A673 (cell line): ENCODE measurements at regions of chr12 and their contacts with region 1.

Region 1: DNA sequence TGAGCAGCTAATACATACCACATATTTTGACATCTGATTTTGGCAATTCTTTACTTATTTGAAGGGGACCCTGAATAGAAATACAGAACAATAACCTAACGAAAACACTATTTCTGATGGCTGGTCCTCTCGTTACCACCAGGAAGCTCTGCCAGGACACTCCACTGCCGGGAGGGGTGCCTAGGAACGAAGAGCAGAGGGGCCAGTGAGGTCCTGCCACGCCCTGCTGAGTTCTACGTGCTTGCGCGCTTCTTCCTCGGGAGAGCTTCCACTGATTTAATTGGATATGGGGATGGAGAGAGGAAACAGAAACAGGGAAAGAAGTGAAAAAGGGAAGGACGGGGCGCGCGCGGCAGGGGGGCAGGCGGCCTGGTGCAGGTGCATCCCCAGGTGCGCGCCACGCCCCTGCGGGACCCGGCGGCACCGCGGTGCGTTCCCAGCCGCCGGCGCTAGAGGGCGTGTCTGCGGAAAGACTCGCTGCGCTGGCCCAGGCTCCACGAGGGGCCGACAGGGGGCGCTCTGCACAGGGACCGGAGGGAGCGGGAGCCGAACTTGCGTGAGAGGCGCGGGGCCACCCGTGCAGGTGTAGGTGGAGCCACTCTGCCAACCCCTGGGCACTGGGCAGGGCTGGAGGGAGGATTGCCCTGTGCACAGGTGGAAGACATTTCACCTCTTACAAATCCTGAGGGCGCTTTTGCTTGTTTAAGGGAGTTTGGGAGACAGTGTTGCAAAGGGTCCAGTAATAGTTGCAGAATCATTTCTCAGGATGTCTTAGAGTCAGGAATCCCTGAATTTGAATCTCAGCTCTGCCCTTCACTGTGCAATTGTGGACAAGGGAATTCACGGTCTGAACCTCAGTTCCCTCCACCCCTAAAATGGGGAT is 986.3 kb upstream of the TMEM132C start:
- DNase-seq: no peak
- H3K4me3 ChIP-seq: no peak overlapping the region
- H3K27ac ChIP-seq: peak overlapping the region; percentile 10
- H3K4me1 ChIP-seq: peaks cover 44% of the 10 kb centered on the region
- H3K27me3 ChIP-seq: no peaks in the 10 kb centered on the region
- CTCF ChIP-seq: peak; percentile 32

Region 2: GRCh38 chr12:125533434-125534029 is 1747.1 kb before region 1 on chr12:
- CTCF ChIA-PET with region 1: no interaction called
- POLR2A ChIA-PET with region 1: no interaction called
- intact Hi-C with region 1: loop called (anchors 5 kb)
- DNase-seq: peak; percentile 68
- H3K4me3 ChIP-seq: no peak overlapping the region
- H3K27ac ChIP-seq: no peak overlapping the region
- H3K4me1 ChIP-seq: no peaks in the 10 kb centered on the region
- H3K27me3 ChIP-seq: peaks cover 3% of the 10 kb centered on the region
- CTCF ChIP-seq: peak; percentile 84

Region 3: DNA sequence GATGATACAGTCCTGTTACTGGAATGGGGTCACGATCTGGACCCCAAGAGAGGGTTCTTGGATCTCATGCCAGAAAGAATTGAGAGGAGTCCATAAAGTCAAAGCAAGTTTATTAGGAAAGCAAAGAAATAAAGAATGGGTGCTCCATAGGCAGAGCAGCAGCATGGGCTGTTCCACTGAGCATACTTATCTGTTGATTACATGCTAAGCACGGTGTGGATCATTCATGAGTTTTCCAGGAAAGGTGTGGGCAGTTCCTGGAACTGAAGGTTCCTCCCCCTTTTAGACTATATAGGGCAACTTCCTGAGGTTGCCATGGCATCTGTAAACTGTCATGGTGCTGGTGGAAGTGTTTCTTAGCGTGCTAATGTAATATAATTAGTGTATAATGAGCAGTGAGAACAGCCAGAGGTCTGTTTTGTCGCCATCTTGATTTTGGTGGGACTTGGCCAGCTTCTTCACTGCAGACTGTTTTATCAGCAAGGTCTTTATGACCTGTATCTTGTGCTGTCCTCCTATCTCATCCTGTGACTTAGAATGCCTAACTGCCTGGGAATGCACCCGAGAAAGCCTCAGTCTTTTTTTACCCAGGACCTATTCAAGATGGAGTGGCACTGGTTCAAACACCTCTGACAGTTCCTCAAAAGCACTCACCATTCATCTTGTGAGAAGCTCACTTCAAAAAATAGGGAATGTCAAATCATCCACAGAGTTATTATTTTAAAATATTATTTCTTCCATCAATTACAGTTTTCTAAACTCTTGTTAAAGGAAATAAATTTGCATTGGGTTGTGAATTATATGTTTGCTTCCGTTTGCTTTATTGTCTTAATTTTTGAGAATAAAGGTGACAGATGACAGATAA is 372.5 kb before region 1 on chr12:
- CTCF ChIA-PET with region 1: no interaction called
- POLR2A ChIA-PET with region 1: no interaction called
- intact Hi-C with region 1: loop called (anchors 10 kb)
- DNase-seq: no peak
- H3K4me3 ChIP-seq: no peak overlapping the region
- H3K27ac ChIP-seq: no peak overlapping the region
- H3K4me1 ChIP-seq: no peaks in the 10 kb centered on the region
- H3K27me3 ChIP-seq: no peaks in the 10 kb centered on the region
- CTCF ChIP-seq: no peak

Region 4: DNA sequence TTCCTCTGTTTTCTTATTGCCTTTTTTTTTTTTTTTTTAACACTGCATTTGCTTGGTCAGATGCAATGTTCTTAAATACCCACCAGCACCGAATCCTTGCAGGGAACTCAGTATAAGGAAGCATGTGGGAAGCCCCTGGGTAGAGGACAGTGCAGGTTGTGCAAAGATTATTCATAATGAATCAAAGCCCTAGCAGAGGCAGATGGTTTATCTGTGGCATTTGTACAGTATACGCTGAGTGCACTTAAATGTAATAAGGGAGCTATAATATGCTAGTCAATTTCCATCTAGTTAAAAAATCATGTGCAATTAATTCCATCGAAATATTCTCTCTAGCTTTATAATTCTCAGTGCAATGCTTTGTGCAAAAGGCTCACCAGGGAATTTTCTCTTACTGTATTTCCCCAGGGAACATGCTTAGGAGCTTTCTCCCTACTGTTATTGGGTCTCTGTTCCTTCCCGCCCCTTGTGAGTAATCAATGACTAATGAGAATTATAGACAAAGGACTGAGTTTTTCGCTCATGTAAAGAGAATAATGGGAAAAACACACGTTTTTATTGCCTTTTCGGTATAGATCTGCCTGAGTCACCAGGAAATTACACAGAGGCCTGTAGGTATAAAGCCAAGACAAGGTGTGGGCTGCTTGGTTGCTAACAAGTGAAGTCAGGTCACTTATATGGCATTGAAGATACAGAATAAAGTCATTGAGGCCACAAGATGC is 228.0 kb before region 1 on chr12:
- CTCF ChIA-PET with region 1: no interaction called
- POLR2A ChIA-PET with region 1: no interaction called
- intact Hi-C with region 1: no loop called
- DNase-seq: peak; percentile 35
- H3K4me3 ChIP-seq: no peak overlapping the region
- H3K27ac ChIP-seq: no peak overlapping the region
- H3K4me1 ChIP-seq: no peaks in the 10 kb centered on the region
- H3K27me3 ChIP-seq: no peaks in the 10 kb centered on the region
- CTCF ChIP-seq: no peak

Region 5: GRCh38 chr12:127108360-127109215 is 172.0 kb before region 1 on chr12:
- CTCF ChIA-PET with region 1: interaction called, 8 read pairs
- POLR2A ChIA-PET with region 1: no interaction called
- intact Hi-C with region 1: loop called (anchors 2 kb)
- DNase-seq: peak; percentile 85
- H3K4me3 ChIP-seq: no peak overlapping the region
- H3K27ac ChIP-seq: peak overlapping the region; percentile 38
- H3K4me1 ChIP-seq: peaks cover 11% of the 10 kb centered on the region
- H3K27me3 ChIP-seq: no peaks in the 10 kb centered on the region
- CTCF ChIP-seq: peak; percentile 83

Region 6: DNA sequence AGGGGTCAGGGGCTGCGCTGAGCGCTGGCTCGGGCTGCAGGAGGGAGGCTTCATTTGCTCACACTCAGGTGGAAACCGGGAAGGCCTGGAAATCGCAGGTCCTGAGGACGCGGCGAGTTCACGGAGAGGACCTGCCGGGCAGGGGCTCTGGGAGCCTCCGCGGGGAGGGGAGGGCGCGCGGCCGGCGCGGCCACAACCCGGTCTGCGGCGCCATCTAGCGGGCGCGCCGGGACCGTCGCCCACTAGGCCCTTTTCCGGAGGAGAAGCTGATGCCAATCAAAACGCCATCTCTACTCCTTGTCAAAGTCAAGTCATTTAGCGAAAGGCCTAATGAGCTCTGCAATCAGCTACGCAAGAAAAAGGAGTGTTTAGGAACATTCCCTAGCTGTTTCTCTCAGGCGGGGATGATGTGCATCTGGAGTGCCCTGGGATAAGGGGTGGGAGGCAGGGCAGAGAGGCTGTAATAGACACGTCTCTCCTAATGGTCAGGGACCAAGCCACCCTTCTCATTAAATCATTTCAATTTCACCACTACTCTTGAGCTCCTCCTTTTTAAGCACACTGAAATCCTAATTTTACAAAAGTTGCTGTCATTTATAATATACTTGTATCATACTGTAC is 100.5 kb after region 1 on chr12:
- CTCF ChIA-PET with region 1: no interaction called
- POLR2A ChIA-PET with region 1: no interaction called
- intact Hi-C with region 1: loop called (anchors 5 kb)
- DNase-seq: peak; percentile 81
- H3K4me3 ChIP-seq: peak overlapping the region; percentile 42
- H3K27ac ChIP-seq: peak overlapping the region; percentile 26
- H3K4me1 ChIP-seq: peaks cover 3% of the 10 kb centered on the region
- H3K27me3 ChIP-seq: no peaks in the 10 kb centered on the region
- CTCF ChIP-seq: peak; percentile 90